ENCODE measurements at regions of chr10 and their contacts with region 1.

Region 1: DNA sequence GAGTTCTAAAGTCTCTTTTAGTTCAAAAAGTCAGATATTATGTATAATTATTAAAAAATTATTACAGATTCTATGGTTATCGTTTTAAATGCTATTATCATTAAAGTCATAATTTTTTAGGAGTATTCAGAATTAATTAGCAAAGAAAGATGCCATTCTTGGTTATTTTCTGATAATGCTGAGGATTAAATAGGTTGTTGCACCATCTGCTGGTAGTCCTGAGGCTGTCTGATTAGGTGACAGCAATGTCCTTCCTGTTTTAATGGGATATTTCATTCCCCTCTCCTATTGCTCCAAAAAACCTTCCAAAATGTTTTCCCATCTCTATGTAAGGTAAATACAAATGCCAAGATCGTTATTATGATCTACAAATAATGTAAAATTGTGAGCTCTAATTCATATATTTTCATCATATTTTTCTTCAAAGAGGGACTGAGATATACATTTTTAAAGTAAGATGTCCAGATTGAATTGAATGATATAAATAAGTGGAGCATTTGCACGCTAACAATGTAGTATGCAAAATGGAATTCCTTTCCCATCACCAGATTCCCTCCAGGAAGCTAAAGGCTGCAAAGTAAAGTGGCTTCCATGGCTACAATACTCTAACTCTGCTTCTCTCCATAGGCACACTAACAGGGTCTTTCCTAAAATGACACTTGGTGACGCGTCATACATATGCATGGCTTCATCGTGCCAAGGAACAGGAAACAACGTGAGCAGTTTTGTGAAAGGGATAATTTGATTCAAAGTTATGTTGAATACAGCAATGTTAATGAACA is 58.8 kb upstream of the AKR1E2 start:
- DNase-seq: peak in 2 of 5 donors; percentile 19 to 28
- ATAC-seq: peak in 3 of 4 donors; percentile 44 to 66 (median 57)
- H3K4me3 ChIP-seq: no peak overlapping the region
- H3K27ac ChIP-seq: peak overlapping the region in 10 of 12 donors; percentile 1 to 53 (median 36)
- H3K4me1 ChIP-seq: peaks cover 0 to 52% (median 33%) of the 10 kb centered on the region in 12 donors
- H3K27me3 ChIP-seq: no peaks in the 10 kb centered on the region
- CTCF ChIP-seq: peak; percentile 58 to 90 (median 81)
- POLR2A ChIP-seq: no peak

Region 2: GRCh38 chr10:3197348-3198003 is 1569.7 kb before region 1 on chr10:
- intact Hi-C with region 1: loop called (anchors 1 to 5 kb)
- DNase-seq: peak; percentile 78 to 90 (median 83)
- ATAC-seq: peak; percentile 76 to 96 (median 92)
- H3K4me3 ChIP-seq: peak overlapping the region in 9 of 12 donors; percentile 18 to 43 (median 32)
- H3K27ac ChIP-seq: peak overlapping the region in 4 of 12 donors; percentile 26 to 61 (median 28)
- H3K4me1 ChIP-seq: peaks cover 0 to 23% (median 11%) of the 10 kb centered on the region in 12 donors
- H3K27me3 ChIP-seq: no peaks in the 10 kb centered on the region
- CTCF ChIP-seq: peak; percentile 81 to 96 (median 93)
- POLR2A ChIP-seq: no peak

Region 3: GRCh38 chr10:3239066-3239919 is 1527.9 kb before region 1 on chr10:
- intact Hi-C with region 1: loop called (anchors 1 to 10 kb)
- DNase-seq: peak; percentile 70 to 85 (median 75)
- ATAC-seq: peak; percentile 59 to 88 (median 82)
- H3K4me3 ChIP-seq: peak overlapping the region in 8 of 12 donors; percentile 6 to 36 (median 24)
- H3K27ac ChIP-seq: peak overlapping the region in 8 of 12 donors; percentile 39 to 75 (median 54)
- H3K4me1 ChIP-seq: peaks cover 0 to 10% (median 3%) of the 10 kb centered on the region in 12 donors
- H3K27me3 ChIP-seq: no peaks in the 10 kb centered on the region
- CTCF ChIP-seq: peak; percentile 84 to 98 (median 94)
- POLR2A ChIP-seq: no peak

Region 4: DNA sequence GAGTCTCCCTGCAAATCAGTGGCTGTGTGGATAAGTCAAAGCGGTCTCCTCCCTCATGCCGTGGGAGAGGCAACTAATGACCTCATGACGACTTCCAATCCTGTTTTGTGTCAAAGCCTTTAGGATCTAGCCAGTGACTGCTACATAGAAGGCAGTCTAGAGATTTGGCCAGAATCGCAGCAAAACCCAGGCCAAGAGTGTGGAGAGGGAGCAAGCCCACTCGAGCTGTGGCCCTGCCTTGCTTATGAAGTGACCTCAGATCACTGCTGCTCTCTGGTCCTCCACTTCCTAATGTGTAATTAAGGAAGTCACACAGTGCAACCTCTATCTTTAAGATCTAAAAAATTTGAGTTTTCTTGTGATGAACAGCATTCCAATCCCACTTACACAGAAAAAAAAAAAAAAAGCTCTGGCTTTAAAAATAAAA is 685.5 kb before region 1 on chr10:
- intact Hi-C with region 1: loop called in 1 of 10 experiments (anchors 10 kb)
- DNase-seq: peak in 3 of 5 donors; percentile 43 to 55 (median 47)
- ATAC-seq: peak in 3 of 4 donors; percentile 28 to 57 (median 57)
- H3K4me3 ChIP-seq: no peak overlapping the region
- H3K27ac ChIP-seq: peak overlapping the region in 10 of 12 donors; percentile 40 to 59 (median 52)
- H3K4me1 ChIP-seq: peaks cover 0 to 55% (median 32%) of the 10 kb centered on the region in 12 donors
- H3K27me3 ChIP-seq: no peaks in the 10 kb centered on the region
- CTCF ChIP-seq: no peak
- POLR2A ChIP-seq: no peak

Region 5: GRCh38 chr10:4512671-4513240 is 254.5 kb before region 1 on chr10:
- intact Hi-C with region 1: loop called in 9 of 10 experiments (anchors 2 to 5 kb)
- DNase-seq: peak; percentile 51 to 79 (median 69)
- ATAC-seq: peak; percentile 79 to 91 (median 88)
- H3K4me3 ChIP-seq: no peak overlapping the region
- H3K27ac ChIP-seq: peak overlapping the region; percentile 10 to 85 (median 70)
- H3K4me1 ChIP-seq: peaks cover 5 to 48% (median 30%) of the 10 kb centered on the region in 12 donors
- H3K27me3 ChIP-seq: no peaks in the 10 kb centered on the region
- CTCF ChIP-seq: peak; percentile 36 to 68 (median 54)
- POLR2A ChIP-seq: no peak

Region 6: GRCh38 chr10:4678023-4678950 is 88.9 kb before region 1 on chr10:
- intact Hi-C with region 1: loop called in 1 of 10 experiments (anchors 5 kb)
- DNase-seq: no peak
- ATAC-seq: peak; percentile 68 to 91 (median 70)
- H3K4me3 ChIP-seq: no peak overlapping the region
- H3K27ac ChIP-seq: peak overlapping the region in 8 of 12 donors; percentile 2 to 55 (median 41)
- H3K4me1 ChIP-seq: peaks cover 0 to 8% (median 0%) of the 10 kb centered on the region in 12 donors
- H3K27me3 ChIP-seq: no peaks in the 10 kb centered on the region
- CTCF ChIP-seq: no peak
- POLR2A ChIP-seq: no peak

Region 7: GRCh38 chr10:4710858-4711257 is 56.4 kb before region 1 on chr10:
- intact Hi-C with region 1: loop called in 1 of 10 experiments (anchors 5 kb)
- DNase-seq: no peak
- ATAC-seq: no peak
- H3K4me3 ChIP-seq: no peak overlapping the region
- H3K27ac ChIP-seq: no peak overlapping the region
- H3K4me1 ChIP-seq: peaks cover 0 to 6% (median 0%) of the 10 kb centered on the region in 12 donors
- H3K27me3 ChIP-seq: no peaks in the 10 kb centered on the region
- CTCF ChIP-seq: no peak
- POLR2A ChIP-seq: no peak